ENCODE measurements at regions of chr12 and their contacts with region 1.

Region 1: DNA sequence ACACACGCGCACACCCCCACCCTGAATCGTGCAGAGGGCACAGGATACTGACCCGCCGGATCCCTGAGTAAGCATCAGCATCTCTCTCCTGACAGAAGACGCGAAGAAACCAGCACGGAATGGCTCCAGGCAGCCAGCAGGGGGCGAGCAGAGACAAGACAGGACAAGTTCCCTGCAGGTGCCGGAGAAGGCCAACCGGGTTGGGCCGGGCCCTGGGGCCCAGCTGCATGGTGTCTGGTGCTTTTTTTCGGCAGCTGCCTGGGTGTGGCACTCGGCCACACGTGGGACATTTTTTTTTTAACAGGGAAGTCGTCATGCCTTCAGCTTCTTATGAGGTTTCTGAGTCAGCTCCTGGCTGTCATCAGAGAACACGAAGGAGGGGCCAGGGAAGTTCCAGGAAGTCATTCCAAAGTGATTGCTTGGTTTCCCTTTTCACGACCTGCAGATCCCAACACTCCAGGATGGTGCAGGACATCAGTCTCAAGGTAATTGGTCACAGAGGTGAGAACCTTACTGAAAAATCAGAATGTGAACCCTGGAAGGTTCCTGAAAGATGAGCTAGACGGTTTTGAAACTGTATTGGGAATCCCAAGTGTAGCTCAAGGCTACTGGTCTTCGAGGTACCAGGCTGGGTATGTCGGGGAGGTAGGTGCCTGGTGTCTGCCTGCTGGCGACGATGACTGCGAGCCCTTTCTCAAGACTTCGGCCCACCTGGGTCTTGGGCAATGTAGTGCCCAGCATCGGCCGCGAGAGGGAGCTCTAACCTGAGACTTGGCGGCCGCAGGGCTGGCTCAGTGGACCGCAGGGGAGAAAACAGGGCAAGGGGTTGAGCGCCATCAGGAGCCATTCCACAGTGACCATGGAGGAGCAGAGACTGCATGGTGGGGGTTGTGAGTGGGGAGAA is 190.8 kb upstream of the PRMT8 start:
- DNase-seq: peak; percentile 90 to 94
- H3K4me3 ChIP-seq: peak overlapping the region in 2 of 4 donors; percentile 8 to 23
- H3K27ac ChIP-seq: peak overlapping the region; percentile 60 to 76 (median 68)
- H3K4me1 ChIP-seq: peaks cover 8 to 29% (median 16%) of the 10 kb centered on the region in 4 donors
- H3K27me3 ChIP-seq: peaks cover 0 to 44% (median 6%) of the 10 kb centered on the region in 3 donors
- CTCF ChIP-seq: peak in 5 of 7 experiments; percentile 90 to 97 (median 94)
- EP300 ChIP-seq: no peak
- POLR2A ChIP-seq: no peak

Region 2: DNA sequence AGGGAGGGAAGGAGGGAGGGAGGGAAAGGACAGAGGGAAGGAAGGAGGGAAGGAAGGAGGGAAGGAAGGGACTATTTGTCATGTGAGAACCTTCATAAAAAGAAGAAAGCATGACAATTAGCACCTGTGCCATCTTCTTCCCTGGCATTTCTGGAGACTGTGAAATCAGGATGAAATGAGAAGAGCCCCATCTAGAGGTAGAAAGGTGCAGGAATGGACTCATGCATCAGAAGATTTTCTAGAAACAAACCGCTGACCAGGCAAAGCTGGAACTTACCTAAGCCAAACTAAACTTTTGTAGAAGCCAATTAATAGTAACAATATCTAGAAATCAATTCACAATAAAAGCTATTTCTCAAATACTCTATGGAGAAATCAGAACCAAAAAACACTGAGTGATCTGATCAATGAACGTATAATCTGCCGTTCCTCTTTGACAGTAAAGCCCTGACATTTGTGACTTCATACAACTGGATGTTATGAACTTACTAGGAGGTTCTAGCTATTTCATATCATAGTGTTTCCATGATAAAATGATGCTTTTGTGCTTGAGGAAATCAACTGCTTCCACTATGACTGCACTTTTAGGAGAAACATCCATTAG is 477.1 kb after region 1 on chr12:
- intact Hi-C with region 1: loop called (anchors 5 kb)
- DNase-seq: peak in 1 of 2 donors; percentile 74
- H3K4me3 ChIP-seq: no peak overlapping the region
- H3K27ac ChIP-seq: no peak overlapping the region
- H3K4me1 ChIP-seq: no peaks in the 10 kb centered on the region
- H3K27me3 ChIP-seq: no peaks in the 10 kb centered on the region
- CTCF ChIP-seq: peak in 5 of 7 experiments; percentile 19 to 67 (median 62)
- EP300 ChIP-seq: no peak
- POLR2A ChIP-seq: no peak

Region 3: GRCh38 chr12:3809347-3810015 is 509.3 kb after region 1 on chr12:
- intact Hi-C with region 1: loop called (anchors 5 kb)
- DNase-seq: no peak
- H3K4me3 ChIP-seq: no peak overlapping the region
- H3K27ac ChIP-seq: no peak overlapping the region
- H3K4me1 ChIP-seq: no peaks in the 10 kb centered on the region
- H3K27me3 ChIP-seq: no peaks in the 10 kb centered on the region
- CTCF ChIP-seq: no peak
- EP300 ChIP-seq: no peak
- POLR2A ChIP-seq: no peak